Lower leg skin (tissue), 4 donors: ENCODE measurements at regions of chr9 and their contacts with region 1.

Region 1: DNA sequence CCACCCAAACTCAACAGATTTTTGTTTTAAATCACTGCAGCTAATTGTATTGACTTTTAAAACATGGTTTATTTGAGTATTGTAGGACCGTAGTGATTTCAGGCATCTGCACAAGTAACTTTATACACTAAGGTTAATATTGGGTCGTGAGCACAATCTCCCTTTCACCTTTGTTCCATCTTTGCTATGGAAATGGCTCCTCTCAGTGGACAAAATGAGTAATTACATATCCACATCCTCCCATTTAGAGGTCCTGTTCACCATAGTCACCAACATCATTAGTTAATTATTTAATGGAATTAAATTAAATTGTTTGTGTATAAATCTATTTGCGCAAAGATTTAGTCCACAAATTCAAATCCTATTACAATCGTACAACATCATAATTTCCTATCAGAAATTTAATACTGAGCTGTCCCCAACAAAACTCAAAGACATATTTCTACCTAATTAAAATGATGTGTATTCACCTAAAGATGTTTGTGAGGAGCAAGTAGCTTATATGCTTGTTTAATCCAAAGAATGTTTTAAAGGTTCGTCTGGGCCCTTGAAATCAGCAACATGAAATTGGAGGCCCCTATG is 173.0 kb upstream of the DAPK1 start:
- DNase-seq: no peak
- H3K4me3 ChIP-seq: no peak overlapping the region
- CTCF ChIP-seq: peak in 1 of 3 donors; percentile 49
- POLR2A ChIP-seq: no peak

Region 2: DNA sequence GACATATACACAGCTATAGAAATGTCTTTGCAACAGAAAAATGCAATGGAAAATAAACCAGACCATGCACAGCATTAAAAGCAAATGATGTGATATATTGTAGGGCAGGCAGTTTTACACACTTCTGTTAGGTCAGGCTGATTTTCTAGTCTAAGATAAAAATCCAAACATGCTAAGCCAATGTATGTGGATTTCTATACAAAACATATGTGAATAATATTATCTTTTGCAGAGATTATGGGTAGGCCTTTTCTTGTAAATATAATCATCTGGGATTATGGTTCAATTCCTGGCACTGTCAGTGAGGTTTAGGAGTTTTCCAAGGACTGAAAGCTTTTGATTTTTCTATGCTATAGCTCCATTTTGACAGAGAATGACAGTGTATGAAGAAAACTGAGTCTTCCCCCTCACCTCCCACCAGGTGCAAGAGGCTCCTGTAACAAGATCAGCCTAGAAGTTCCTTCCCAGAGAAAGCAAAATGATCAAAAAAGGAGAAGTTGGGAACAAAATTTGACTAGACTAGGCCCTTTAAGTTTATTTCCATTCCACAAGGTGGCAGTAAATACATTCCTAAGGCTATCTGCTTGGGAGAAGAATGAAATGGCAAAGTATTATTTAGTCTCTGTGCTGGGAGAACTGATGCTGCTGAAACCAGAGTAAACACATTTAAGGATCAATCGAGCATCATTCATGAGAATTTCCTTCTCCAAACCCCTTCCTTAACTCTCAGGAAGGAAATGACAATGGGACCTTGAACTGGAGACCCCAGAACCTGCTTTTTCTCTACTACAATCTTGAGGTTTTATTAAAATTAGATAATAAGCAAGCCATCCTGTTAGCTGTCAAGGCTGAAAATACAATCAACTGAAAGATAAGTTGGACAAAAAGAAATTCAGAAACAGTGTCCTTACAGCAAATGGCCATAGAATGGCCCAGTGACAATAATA is 837.5 kb before region 1 on chr9:
- intact Hi-C with region 1: loop called (anchors 2 kb)
- DNase-seq: no peak
- H3K4me3 ChIP-seq: no peak overlapping the region
- CTCF ChIP-seq: peak in 1 of 3 donors; percentile 51
- POLR2A ChIP-seq: no peak

Region 3: GRCh38 chr9:86948074-86948929 is 376.4 kb before region 1 on chr9:
- intact Hi-C with region 1: loop called (anchors 5 kb)
- DNase-seq: peak; percentile 80 to 95
- H3K4me3 ChIP-seq: peak overlapping the region; percentile 18
- CTCF ChIP-seq: peak in 1 of 3 donors; percentile 73
- POLR2A ChIP-seq: no peak